ENCODE measurements at regions of chr3 and their contacts with region 1.

Region 1: GRCh38 chr3:32428092-32429068 is 36.7 kb downstream of the CMTM7 start:
- DNase-seq: no peak
- H3K4me3 Mint-ChIP-seq: peak overlapping the region; percentile 63
- H3K27ac Mint-ChIP-seq: peak overlapping the region; percentile 87
- H3K4me1 Mint-ChIP-seq: peaks cover 88% of the 10 kb centered on the region
- H3K27me3 Mint-ChIP-seq: no peaks in the 10 kb centered on the region

Region 2: GRCh38 chr3:31891974-31892373 is 536.4 kb before region 1 on chr3:
- intact Hi-C with region 1: no loop called
- DNase-seq: no peak
- H3K4me3 Mint-ChIP-seq: no peak overlapping the region
- H3K27ac Mint-ChIP-seq: no peak overlapping the region
- H3K4me1 Mint-ChIP-seq: peaks cover 9% of the 10 kb centered on the region
- H3K27me3 Mint-ChIP-seq: peaks cover 5% of the 10 kb centered on the region

Region 3: GRCh38 chr3:32391643-32392535 is 36.5 kb before region 1 on chr3 and contains the start of gene CMTM7:
- intact Hi-C with region 1: loop called (anchors 2 kb)
- DNase-seq: peak; percentile 66
- H3K4me3 Mint-ChIP-seq: peak within 1 kb of the TSS; percentile 98
- H3K27ac Mint-ChIP-seq: peak within 1 kb of the TSS; percentile 98
- H3K4me1 Mint-ChIP-seq: peaks cover 61% of the 10 kb centered on the region
- H3K27me3 Mint-ChIP-seq: no peaks in the 10 kb centered on the region
- total RNA-seq, gene CMTM7: 50.6 and 59.7 TPM in 2 replicates

Region 4: DNA sequence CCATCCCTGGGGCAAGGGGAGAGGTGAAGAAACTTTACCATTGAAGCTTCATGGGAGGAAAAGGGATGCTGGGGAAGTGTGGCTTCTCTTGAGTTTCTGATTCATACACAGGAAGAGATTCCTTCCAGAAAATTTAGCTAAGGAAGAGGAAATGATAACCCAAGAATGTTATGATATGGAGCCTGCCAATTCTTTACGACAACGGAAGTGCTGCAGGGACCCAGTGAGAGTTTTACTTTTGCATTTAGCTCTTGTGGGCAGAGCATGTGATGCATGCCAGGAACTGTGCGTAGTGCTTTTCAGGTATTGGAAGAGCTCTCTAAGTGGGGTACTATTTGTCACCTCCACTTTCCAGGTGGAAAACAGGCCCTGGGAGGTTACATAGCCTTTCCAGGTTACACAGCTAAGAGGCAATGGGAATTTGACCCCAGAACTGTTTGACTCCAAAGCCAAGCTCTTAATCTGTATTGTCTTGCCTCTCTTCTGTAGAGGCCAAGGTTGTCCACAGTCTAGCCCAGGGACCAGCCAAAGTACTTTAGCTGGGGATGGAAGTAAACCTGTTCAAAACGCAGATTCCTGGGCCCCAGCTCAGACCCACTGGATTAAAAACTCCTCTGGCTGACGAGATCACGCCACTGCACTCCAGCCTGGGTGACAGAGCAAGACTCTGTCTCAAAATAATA is 13.7 kb before region 1 on chr3:
- intact Hi-C with region 1: loop called (anchors 2 kb)
- DNase-seq: peak; percentile 59
- H3K4me3 Mint-ChIP-seq: peak overlapping the region; percentile 53
- H3K27ac Mint-ChIP-seq: peak overlapping the region; percentile 86
- H3K4me1 Mint-ChIP-seq: peaks cover 81% of the 10 kb centered on the region
- H3K27me3 Mint-ChIP-seq: no peaks in the 10 kb centered on the region

Region 5: DNA sequence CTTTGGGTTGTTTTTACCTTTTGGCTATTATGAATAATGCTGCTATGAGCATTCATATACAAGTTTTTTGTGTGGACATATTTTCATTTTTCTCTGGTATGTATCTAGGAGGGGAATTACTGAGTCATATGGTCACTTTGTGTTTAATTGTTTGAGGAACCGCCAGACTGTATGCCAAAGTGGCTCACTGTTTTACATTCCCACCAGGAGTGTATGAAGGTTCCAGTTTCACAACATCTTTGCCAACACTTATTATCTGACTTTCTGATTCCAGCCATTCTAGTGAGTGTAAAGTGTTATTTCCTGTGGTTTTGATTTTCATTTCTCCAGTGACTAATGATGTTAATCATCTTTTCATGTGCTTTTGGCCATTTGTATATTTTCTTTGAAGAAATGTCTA is 15.1 kb after region 1 on chr3:
- intact Hi-C with region 1: loop called (anchors 1 kb)
- DNase-seq: no peak
- H3K4me3 Mint-ChIP-seq: no peak overlapping the region
- H3K27ac Mint-ChIP-seq: peak overlapping the region; percentile 11
- H3K4me1 Mint-ChIP-seq: peaks cover 57% of the 10 kb centered on the region
- H3K27me3 Mint-ChIP-seq: no peaks in the 10 kb centered on the region

Region 6: DNA sequence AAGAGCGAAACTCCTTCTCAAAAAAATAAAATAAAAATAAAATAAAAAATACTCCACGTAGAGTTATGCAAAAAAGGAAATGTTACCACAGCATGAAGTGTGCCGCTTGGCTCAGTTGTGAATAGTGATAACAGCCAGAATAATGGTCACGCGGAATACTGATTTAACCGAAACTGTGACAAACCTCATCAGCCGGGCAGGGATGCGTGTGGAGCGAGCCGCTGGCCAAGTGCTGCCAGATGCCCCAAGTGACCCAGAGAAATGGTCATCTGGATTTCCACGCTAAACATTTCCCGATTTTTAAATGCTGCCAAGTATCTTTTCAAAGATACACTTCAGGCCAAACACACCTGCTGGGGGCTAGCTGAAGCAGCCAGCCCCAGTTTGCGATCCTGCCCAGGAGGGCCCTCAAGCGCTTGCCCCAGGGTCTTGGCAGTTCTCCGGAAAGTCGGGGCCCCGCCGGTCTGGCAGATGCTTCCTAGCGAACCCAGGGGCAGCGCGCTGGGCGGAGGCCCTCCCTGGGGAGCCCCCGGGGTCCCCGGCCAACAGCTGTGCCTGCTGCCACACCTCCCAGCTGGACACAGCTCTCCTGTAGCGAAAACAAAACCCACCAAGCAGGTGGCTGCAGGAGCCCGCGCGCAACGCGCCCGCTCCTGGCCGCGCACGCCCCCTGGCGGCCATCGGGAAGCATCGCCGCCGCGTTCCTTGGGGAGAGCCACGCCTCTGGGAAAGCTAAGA is 39.1 kb after region 1 on chr3:
- intact Hi-C with region 1: loop called (anchors 1 kb)
- DNase-seq: peak; percentile 68
- H3K4me3 Mint-ChIP-seq: no peak overlapping the region
- H3K27ac Mint-ChIP-seq: no peak overlapping the region
- H3K4me1 Mint-ChIP-seq: peaks cover 54% of the 10 kb centered on the region
- H3K27me3 Mint-ChIP-seq: no peaks in the 10 kb centered on the region

Region 7: GRCh38 chr3:32502118-32502945 is 74.0 kb after region 1 on chr3 and contains the start of gene CMTM6:
- intact Hi-C with region 1: loop called (anchors 2 kb)
- DNase-seq: peak; percentile 66
- H3K4me3 Mint-ChIP-seq: peak within 1 kb of the TSS; percentile 100
- H3K27ac Mint-ChIP-seq: peak within 1 kb of the TSS; percentile 96
- H3K4me1 Mint-ChIP-seq: peaks cover 41% of the 10 kb centered on the region
- H3K27me3 Mint-ChIP-seq: peaks cover 3% of the 10 kb centered on the region
- total RNA-seq, gene CMTM6: 94.2 and 96.4 TPM in 2 replicates